ENCODE measurements at regions of chr5 and their contacts with region 1.

Region 1: GRCh38 chr5:59188419-59189225 is 605.7 kb downstream of the RAB3C start:
- DNase-seq: peak; percentile 28
- H3K4me3 ChIP-seq: no peak overlapping the region
- H3K27ac ChIP-seq: no peak overlapping the region
- H3K4me1 ChIP-seq: peaks cover 4% of the 10 kb centered on the region
- H3K27me3 ChIP-seq: no peaks in the 10 kb centered on the region
- CTCF ChIP-seq: peak; percentile 49 to 81 (median 63)

Region 2: DNA sequence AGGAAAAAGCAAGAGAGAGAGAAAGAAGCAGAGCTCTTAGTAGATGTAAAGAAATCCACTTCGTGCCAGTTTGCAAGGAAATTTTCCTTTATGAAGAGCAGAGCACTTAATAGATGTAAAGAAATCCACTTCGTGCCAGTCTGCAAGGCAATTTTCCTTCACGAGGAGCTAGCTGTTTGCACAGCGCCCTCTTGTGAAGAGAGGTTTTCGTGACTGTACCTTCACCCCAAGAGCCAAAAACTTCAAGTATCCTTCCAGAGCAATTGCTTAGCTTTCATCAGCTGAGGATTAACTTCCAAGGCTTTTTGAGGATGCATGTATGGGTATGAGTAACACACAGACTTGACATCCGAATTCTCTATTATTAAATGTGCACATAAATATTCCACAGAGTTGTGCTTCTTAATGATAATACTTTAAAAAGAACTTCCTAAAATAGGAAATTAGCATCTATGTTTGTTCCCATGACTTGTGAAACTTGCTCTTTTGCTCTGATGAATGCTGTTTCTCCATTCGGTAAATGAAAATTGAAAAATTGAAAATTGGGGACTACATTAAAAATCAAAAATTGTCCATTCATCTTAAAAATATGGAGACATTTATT is 179.3 kb after region 1 on chr5:
- dilution Hi-C with region 1: loop called (anchors 25 kb)
- DNase-seq: peak; percentile 4
- H3K4me3 ChIP-seq: no peak overlapping the region
- H3K27ac ChIP-seq: no peak overlapping the region
- H3K4me1 ChIP-seq: no peaks in the 10 kb centered on the region
- H3K27me3 ChIP-seq: no peaks in the 10 kb centered on the region
- CTCF ChIP-seq: peak; percentile 79 to 83 (median 81)

Measured in keratinocyte (primary cell).